ENCODE measurements at regions of chr6 and their contacts with region 1.

Region 1: GRCh38 chr6:116615937-116616736 is at the start of gene RSPH4A:
- DNase-seq: peak; percentile 78
- ATAC-seq: peak; percentile 98
- H3K4me3 ChIP-seq: peak within 1 kb of the TSS; percentile 47 to 66 (median 55)
- H3K27ac ChIP-seq: no peak within 1 kb of the TSS
- H3K4me1 ChIP-seq: no peaks in the 10 kb centered on the region
- H3K27me3 ChIP-seq: no peaks in the 10 kb centered on the region; a peak in 1 of 5 replicates
- CTCF ChIP-seq: peak; percentile 70
- EP300 ChIP-seq: no peak
- POLR2A ChIP-seq: no peak
- RAD21 ChIP-seq: no peak
- total RNA-seq, gene RSPH4A: 0.14 and 0.40 TPM in 2 replicates

Region 2: GRCh38 chr6:116662202-116662601 is 46.1 kb after region 1 on chr6:
- CTCF ChIA-PET with region 1: no interaction called
- POLR2A ChIA-PET with region 1: no interaction called
- in situ Hi-C with region 1: no loop called
- intact Hi-C with region 1: loop called (anchors 1 kb)
- DNase-seq: no peak
- ATAC-seq: no peak
- H3K4me3 ChIP-seq: no peak overlapping the region
- H3K27ac ChIP-seq: no peak overlapping the region
- H3K4me1 ChIP-seq: peaks cover 52% of the 10 kb centered on the region
- H3K27me3 ChIP-seq: no peaks in the 10 kb centered on the region
- CTCF ChIP-seq: no peak
- EP300 ChIP-seq: no peak
- POLR2A ChIP-seq: no peak
- RAD21 ChIP-seq: no peak